ENCODE measurements at regions of chr20 and their contacts with region 1.

Region 1: DNA sequence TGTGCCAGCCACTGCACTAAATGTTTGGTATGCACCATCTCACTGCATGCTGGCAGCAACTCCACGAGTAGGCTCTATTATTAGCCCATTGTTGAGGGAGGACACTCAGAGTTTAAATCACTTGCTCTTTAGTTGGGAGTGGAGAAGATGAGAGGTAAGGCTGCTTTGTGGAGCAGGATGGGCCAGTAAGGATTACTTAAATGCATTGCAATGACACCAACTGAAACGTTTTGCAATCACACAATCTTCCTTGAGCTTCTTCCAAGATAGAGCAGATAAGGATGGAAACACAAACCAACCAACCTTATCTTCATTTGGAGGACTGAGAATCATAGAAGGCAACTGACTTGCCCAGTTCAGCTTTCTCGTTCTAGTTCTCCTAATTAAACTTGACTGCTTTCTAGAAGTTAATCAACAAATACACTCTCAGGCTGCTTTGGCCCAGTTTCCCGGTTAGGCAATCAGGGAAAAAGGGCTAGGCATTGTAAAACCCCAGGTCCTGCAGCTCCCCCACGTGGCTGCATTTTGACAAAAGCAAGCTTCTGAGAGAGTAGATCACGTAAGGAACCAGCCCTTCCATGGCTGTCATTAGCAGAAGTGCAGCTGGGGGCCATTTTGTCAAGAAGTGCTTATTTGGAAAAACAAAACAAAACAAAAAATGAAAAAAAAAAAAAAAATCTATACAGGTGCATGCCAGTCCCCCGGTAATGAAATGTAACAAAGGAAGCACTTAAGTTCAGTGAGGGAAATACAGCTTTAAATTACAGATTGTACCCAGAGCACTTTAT is 130.6 kb downstream of the BCAS1 start:
- DNase-seq: peak; percentile 89
- ATAC-seq: peak; percentile 82
- H3K4me3 Mint-ChIP-seq: no peak overlapping the region
- H3K27ac Mint-ChIP-seq: no peak overlapping the region
- H3K4me1 Mint-ChIP-seq: peaks cover 62% of the 10 kb centered on the region
- H3K27me3 Mint-ChIP-seq: no peaks in the 10 kb centered on the region

Region 2: GRCh38 chr20:53623454-53624211 is 316.1 kb before region 1 on chr20:
- CTCF ChIA-PET with region 1: interaction called, 13 read pairs
- POLR2A ChIA-PET with region 1: interaction called, 3 read pairs
- DNase-seq: peak; percentile 56
- ATAC-seq: peak; percentile 75
- H3K4me3 Mint-ChIP-seq: peak overlapping the region; percentile 72
- H3K27ac Mint-ChIP-seq: peak overlapping the region; percentile 97
- H3K4me1 Mint-ChIP-seq: peaks cover 56% of the 10 kb centered on the region
- H3K27me3 Mint-ChIP-seq: no peaks in the 10 kb centered on the region

Region 3: DNA sequence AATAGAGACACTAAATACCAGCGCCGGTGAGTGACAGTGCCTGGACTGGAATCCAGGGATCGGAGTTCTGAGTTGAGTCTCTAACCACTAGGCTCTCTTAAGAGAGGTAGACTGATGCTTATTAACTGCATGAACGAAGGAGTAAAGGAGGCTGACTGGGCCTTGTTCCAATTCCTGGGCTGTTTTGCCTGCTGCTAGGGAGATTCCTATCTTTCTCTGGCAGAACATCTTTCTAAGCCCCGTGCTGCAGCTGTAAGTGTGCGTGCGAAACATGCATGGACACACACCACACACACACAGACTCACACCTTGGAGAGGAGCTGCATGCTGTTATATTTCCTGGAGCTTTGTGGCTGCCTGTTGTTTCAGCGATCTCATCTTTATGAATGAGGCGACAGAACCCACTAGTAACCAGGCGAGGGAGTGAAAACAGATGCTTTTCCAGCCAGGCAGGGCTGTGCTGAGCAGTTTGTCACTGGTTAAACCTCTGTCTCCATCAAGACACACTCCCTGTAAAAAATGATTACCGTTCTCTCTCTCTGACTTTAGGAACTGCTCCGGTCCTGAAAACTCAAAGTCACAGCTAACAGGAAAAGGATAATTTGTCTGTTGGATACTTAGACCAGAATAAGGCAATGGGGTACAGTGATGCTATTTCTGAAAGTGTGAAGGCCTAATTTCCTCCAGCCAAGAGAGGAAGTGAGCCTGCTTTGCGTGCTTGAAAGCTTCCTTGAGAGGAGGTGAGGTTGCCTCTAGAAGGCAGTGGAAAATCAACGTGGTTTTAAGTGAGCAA is 188.7 kb before region 1 on chr20:
- CTCF ChIA-PET with region 1: interaction called, 30 read pairs
- POLR2A ChIA-PET with region 1: interaction called, 6 read pairs
- DNase-seq: peak; percentile 77
- ATAC-seq: peak; percentile 76
- H3K4me3 Mint-ChIP-seq: peak overlapping the region; percentile 56
- H3K27ac Mint-ChIP-seq: peak overlapping the region; percentile 94
- H3K4me1 Mint-ChIP-seq: peaks cover 76% of the 10 kb centered on the region
- H3K27me3 Mint-ChIP-seq: no peaks in the 10 kb centered on the region

Region 4: DNA sequence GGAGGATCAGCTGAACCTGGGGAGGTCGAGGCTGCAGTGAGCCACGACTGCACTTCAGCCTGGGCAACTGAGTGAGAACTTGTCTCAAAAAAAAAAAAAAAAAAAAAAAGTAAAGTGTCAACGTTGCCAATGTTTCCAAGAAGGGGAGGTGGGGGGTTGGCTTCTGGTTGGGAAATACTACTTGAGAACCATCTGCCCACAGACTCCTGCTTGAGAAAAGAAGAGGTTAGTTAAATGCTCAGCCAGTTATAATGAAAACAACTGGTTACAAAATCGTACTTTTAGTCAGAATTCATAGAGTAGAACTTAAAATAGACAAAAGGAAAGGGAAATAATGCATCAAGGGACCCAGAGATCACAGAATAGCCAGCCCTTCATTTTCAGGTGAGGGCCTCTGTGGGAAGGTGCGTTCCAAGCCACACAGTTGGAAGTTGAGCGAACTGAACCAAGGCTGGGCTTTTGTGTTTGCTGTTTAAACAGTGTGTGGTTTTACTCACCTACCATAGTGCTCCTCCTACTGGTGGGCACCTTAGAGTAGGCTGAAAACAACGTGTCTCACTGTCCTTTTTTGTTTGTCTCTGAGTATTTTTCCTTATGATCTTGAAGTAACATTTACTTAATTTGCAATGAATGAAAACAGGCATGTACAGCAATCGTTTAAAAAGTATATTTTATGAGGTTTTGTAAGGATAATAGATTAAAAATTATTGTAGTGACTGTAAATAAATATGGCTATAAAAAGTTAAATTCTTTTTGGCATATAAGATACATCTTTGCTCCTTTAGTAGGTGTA is 70.1 kb before region 1 on chr20:
- CTCF ChIA-PET with region 1: interaction called, 17 read pairs
- POLR2A ChIA-PET with region 1: interaction called, 5 read pairs
- DNase-seq: peak; percentile 87
- ATAC-seq: peak; percentile 76
- H3K4me3 Mint-ChIP-seq: peak overlapping the region; percentile 34
- H3K27ac Mint-ChIP-seq: peak overlapping the region; percentile 76
- H3K4me1 Mint-ChIP-seq: peaks cover 86% of the 10 kb centered on the region
- H3K27me3 Mint-ChIP-seq: no peaks in the 10 kb centered on the region

Region 5: DNA sequence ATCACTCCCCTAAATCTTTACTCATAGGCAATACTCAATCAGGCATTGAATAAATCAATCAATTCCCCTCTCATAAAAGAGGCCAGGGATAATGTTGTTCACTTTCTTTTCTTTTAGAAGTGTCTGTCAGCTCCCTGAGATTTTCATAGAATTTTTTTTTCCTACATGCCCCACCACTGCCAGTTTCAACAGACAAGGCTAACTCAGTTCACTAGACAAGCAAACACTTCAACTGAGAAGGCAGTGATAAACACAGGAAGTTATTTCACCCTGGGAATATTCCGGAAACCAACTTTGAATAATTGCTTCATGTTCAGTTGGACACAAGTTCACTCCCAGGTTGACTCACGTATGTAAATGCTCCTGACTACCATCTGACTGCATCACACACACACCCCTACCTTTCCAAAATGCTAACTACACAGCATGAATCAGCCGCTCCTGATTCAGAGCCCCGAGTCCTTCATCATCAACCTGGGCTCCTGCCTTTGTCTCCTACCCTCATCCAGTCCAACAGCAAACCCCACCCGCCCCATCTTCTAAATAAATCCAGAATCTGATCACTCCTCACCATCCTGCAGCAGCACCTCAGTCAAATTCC is 13.2 kb before region 1 on chr20:
- CTCF ChIA-PET with region 1: interaction called, 39 read pairs
- POLR2A ChIA-PET with region 1: interaction called, 3 read pairs
- DNase-seq: no peak
- ATAC-seq: no peak
- H3K4me3 Mint-ChIP-seq: no peak overlapping the region
- H3K27ac Mint-ChIP-seq: no peak overlapping the region
- H3K4me1 Mint-ChIP-seq: peaks cover 50% of the 10 kb centered on the region
- H3K27me3 Mint-ChIP-seq: no peaks in the 10 kb centered on the region

Measured in activated CD8-positive, alpha-beta T cell treated with anti-CD3 and anti-CD28 coated beads, Interleukin-2, amount 10 ng/mL, durations not matched to agents 7 days and 5 days (primary cell).